K562 (cell line): ENCODE measurements at regions of chr2 and their contacts with region 1.

Region 1: DNA sequence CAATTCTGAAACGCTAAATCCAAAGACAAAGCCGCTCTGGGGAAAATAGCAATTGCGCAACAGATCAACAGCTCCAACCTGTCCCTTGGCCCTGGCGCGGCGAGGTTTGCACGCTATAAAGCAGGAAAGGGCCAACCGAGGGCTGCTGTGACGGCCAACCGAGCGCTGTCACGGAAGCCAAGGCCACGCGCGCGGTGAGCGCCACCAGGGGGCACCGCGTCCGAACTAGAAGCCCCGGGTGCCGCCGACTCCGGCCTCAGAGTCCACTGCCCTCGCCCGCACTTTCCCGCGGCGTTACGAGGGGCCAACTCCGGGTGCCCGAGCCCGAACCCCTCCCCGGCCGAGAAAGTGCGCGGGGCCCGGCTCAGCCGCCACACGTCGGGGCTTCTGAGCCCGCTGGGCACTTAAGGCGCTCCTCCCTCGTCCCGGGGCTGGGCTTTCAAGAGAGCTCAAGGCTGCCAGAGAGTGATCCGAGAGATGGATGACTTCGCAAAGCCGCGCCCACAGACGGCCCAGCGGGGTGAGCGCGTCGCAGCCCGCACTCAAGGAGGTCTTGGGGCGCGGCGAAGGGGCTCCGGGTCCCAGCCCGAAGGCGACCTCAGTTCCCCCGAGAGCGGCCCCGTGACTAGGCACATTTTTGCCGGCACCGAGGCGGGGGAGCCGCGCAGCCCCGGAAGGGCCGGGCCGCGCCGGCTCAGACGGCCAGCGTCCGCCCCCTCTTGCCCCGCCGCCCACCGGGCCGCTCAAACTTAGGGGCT is 897 bp downstream of the NFE2L2 start:
- DNase-seq: peak; percentile 75 to 99 (median 82)
- ATAC-seq: peak; percentile 69
- H3K4me3 ChIP-seq: peak overlapping the region; percentile 91
- H3K27ac ChIP-seq: peak overlapping the region; percentile 98
- H3K4me1 ChIP-seq: peaks cover 32 to 38% of the 10 kb centered on the region in 2 experiments
- H3K27me3 ChIP-seq: no peaks in the 10 kb centered on the region
- CTCF ChIP-seq: peak; percentile 86 to 94 (median 91)
- EP300 ChIP-seq: peak; percentile 83
- POLR2A ChIP-seq: peak; percentile 85
- RAD21 ChIP-seq: peak; percentile 85 to 95

Region 2: DNA sequence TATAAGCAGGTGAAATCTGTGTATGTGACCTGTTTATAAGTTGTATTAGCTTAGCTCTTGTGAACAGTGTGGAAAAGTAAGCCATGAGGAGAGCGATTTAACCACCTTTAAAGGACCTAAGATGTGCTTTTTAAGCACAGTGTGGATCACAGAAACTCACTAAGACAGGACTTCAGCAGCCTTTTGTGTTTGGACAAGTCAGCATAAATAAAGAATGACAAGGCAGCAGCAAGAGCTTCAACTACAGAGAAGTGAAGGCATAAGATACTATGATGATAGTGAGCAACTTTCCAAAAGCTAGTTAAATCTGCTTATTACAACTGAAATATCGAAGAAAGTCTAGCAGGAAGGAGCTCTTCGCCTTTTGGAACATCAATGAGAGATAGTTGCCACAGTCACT is 42.1 kb before region 1 on chr2:
- CTCF ChIA-PET with region 1: no interaction called
- POLR2A ChIA-PET with region 1: interaction called, 50 read pairs
- in situ Hi-C with region 1: no loop called
- intact Hi-C with region 1: no loop called
- DNase-seq: no peak
- ATAC-seq: no peak; the same call in 2 of the 3 replicates
- H3K4me3 ChIP-seq: no peak overlapping the region
- H3K27ac ChIP-seq: no peak overlapping the region
- H3K4me1 ChIP-seq: peaks cover 3 to 7% of the 10 kb centered on the region in 2 experiments; a peak in 3 of 5 replicates
- H3K27me3 ChIP-seq: no peaks in the 10 kb centered on the region
- CTCF ChIP-seq: no peak
- EP300 ChIP-seq: no peak
- POLR2A ChIP-seq: no peak; the same call in 1 of the 2 replicates
- RAD21 ChIP-seq: no peak

Region 3: GRCh38 chr2:177275041-177276020 is 11.7 kb after region 1 on chr2:
- CTCF ChIA-PET with region 1: no interaction called
- POLR2A ChIA-PET with region 1: interaction called, 199 read pairs
- in situ Hi-C with region 1: no loop called
- intact Hi-C with region 1: no loop called
- DNase-seq: no peak
- ATAC-seq: peak; percentile 16; the same call in 1 of the 3 replicates
- H3K4me3 ChIP-seq: no peak overlapping the region
- H3K27ac ChIP-seq: no peak overlapping the region
- H3K4me1 ChIP-seq: no peaks in the 10 kb centered on the region; a peak in 1 of 5 replicates
- H3K27me3 ChIP-seq: no peaks in the 10 kb centered on the region
- CTCF ChIP-seq: no peak
- EP300 ChIP-seq: no peak
- POLR2A ChIP-seq: no peak
- RAD21 ChIP-seq: no peak

Region 4: DNA sequence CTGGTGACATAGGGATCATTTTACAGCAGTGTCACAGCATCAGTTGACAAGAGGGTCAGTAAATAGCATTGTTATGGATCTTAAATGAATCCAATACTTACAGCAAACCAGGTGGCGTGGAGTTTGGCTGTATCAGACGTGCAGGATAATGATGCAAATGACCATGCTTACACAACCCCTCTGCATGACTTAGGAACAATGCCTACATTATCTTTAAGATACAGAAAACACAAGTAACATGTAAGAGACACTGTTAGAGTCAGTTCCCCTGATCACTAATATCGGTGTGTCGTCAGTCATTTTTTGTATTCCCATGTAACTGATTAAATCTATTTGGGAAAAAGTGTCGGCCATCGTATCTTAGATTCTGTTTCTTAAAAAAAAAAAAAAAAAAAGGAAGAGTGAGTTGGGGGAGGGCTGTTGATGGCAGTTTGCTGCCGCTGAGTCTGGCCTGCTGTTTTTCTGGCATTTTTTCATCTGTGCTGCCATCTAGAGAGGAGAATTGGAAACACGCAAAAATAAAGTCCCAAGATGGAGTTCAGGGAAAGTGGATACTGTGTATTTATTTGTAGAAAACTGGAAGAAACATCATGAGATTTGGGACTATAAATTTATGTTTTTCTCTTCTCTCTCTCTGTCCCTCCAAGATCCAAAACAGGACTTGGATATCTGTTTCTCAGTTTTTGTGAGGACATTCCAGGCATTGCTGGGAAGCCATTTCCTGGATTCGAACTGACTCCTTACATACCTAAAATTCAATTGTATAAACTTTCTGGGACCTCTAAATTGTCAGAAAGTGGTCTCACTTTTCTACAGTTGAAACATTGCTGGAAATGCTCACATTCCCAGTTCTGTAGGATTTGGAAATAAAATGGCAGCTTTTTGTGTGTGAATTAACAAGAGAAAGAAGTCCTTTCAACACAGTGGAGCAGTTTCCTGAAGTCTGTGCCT is 68.7 kb after region 1 on chr2:
- CTCF ChIA-PET with region 1: interaction called, 13 read pairs
- POLR2A ChIA-PET with region 1: interaction called, 3 read pairs
- in situ Hi-C with region 1: loop called (anchors 5 kb)
- intact Hi-C with region 1: loop called (anchors 1 kb)
- DNase-seq: peak; percentile 61 to 84 (median 66)
- ATAC-seq: peak; percentile 83
- H3K4me3 ChIP-seq: no peak overlapping the region
- H3K27ac ChIP-seq: peak overlapping the region; percentile 43; the same call in 2 of the 3 replicates
- H3K4me1 ChIP-seq: peaks cover 0 to 21% of the 10 kb centered on the region in 2 experiments; a peak in 4 of 5 replicates
- H3K27me3 ChIP-seq: no peaks in the 10 kb centered on the region
- CTCF ChIP-seq: peak; percentile 78 to 95 (median 81)
- EP300 ChIP-seq: peak; percentile 60
- POLR2A ChIP-seq: no peak
- RAD21 ChIP-seq: peak; percentile 92

Region 5: DNA sequence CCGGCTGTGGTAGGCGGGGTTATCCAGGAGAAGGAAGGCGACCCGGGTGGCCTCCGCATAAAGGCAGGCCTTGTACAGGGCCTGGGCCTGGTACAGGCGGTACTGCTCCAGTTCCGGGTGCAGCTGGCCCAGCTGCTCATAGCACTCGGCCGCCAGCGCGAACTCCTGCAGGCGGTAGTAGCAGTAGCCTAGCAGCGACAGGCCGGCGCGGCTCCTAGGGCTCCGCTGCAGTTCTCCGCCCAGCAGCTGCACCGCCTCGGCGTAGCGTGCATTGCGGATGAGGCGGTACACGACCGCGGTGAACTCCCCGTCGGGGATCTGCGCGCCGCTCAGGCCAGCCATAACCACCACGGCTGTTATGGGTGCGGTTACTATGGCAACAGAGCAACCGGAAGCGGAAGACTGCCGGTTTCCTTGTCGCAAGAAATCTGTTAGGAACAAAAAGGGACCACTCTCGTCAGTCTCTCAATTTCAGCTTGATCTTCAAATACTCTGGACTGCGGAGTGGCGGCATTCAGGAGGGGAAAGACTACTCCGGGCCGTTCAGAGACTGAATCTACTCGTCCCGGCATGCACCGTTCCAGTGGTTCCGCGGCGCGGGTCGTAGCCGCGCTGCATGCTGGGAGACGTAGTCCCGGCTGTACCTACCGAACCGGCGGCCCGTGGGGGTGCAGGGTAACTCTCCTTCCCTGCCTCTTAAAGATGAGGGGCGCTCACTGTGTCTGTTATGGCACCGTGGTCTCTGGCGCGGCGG is 289.0 kb after region 1 on chr2:
- CTCF ChIA-PET with region 1: no interaction called
- POLR2A ChIA-PET with region 1: no interaction called
- in situ Hi-C with region 1: no loop called
- intact Hi-C with region 1: loop called (anchors 5 kb)
- DNase-seq: peak; percentile 94 to 95 (median 94)
- ATAC-seq: peak; percentile 95
- H3K4me3 ChIP-seq: peak overlapping the region; percentile 62
- H3K27ac ChIP-seq: peak overlapping the region; percentile 98
- H3K4me1 ChIP-seq: peaks cover 13 to 17% of the 10 kb centered on the region in 2 experiments
- H3K27me3 ChIP-seq: no peaks in the 10 kb centered on the region
- CTCF ChIP-seq: peak in 1 of 3 experiments; percentile 27; a peak in 1 of 6 replicates
- EP300 ChIP-seq: peak; percentile 22; the same call in 1 of the 2 replicates
- POLR2A ChIP-seq: peak; percentile 91
- RAD21 ChIP-seq: 0 out of 4 replicates have a peak, but pooled peaks of 1 of the 2 experiments have one; percentile 22